ENCODE measurements at regions of chr19 and their contacts with region 1.

Region 1: GRCh38 chr19:12965017-12965811 is 4.2 kb upstream of the DAND5 start:
- DNase-seq: peak; percentile 63 to 88 (median 79)
- ATAC-seq: peak; percentile 95
- H3K4me3 ChIP-seq: peak overlapping the region; percentile 51 to 76
- H3K4me3 Mint-ChIP-seq: peak overlapping the region; percentile 88
- H3K27ac ChIP-seq: no peak overlapping the region
- H3K27ac Mint-ChIP-seq: peak overlapping the region; percentile 53
- H3K4me1 ChIP-seq: peaks cover 9% of the 10 kb centered on the region
- H3K4me1 Mint-ChIP-seq: peaks cover 7% of the 10 kb centered on the region
- H3K27me3 ChIP-seq: no peaks in the 10 kb centered on the region
- H3K27me3 Mint-ChIP-seq: peaks cover 2% of the 10 kb centered on the region
- CTCF ChIP-seq: peak; percentile 93

Region 2: GRCh38 chr19:12890787-12891552 is 74.2 kb before region 1 on chr19 and contains the start of gene GCDH:
- CTCF ChIA-PET with region 1: interaction called, 123 read pairs
- POLR2A ChIA-PET with region 1: interaction called, 8 read pairs
- intact Hi-C with region 1: no loop called
- DNase-seq: peak; percentile 92 to 99 (median 95)
- ATAC-seq: peak; percentile 87
- H3K4me3 ChIP-seq: peak within 1 kb of the TSS; percentile 87 to 92
- H3K4me3 Mint-ChIP-seq: peak within 1 kb of the TSS; percentile 99
- H3K27ac ChIP-seq: peak within 1 kb of the TSS; percentile 77 to 79
- H3K27ac Mint-ChIP-seq: peak within 1 kb of the TSS; percentile 98
- H3K4me1 ChIP-seq: peaks cover 23% of the 10 kb centered on the region
- H3K4me1 Mint-ChIP-seq: peaks cover 29% of the 10 kb centered on the region
- H3K27me3 ChIP-seq: no peaks in the 10 kb centered on the region
- H3K27me3 Mint-ChIP-seq: no peaks in the 10 kb centered on the region
- CTCF ChIP-seq: no peak
- total RNA-seq, gene GCDH: 36.0 to 41.7 TPM

Region 3: GRCh38 chr19:12938234-12939025 is 26.8 kb before region 1 on chr19 and contains the start of gene CALR:
- CTCF ChIA-PET with region 1: interaction called, 15 read pairs
- POLR2A ChIA-PET with region 1: interaction called, 3 read pairs
- intact Hi-C with region 1: no loop called
- DNase-seq: peak; percentile 98 to 100 (median 99)
- ATAC-seq: peak; percentile 88
- H3K4me3 ChIP-seq: peak within 1 kb of the TSS; percentile 71 to 91
- H3K4me3 Mint-ChIP-seq: peak within 1 kb of the TSS; percentile 99
- H3K27ac ChIP-seq: peak within 1 kb of the TSS; percentile 86
- H3K27ac Mint-ChIP-seq: peak within 1 kb of the TSS; percentile 96
- H3K4me1 ChIP-seq: peaks cover 41% of the 10 kb centered on the region
- H3K4me1 Mint-ChIP-seq: peaks cover 58% of the 10 kb centered on the region
- H3K27me3 ChIP-seq: no peaks in the 10 kb centered on the region
- H3K27me3 Mint-ChIP-seq: no peaks in the 10 kb centered on the region
- CTCF ChIP-seq: no peak
- total RNA-seq, gene CALR: 618 to 650 TPM

Region 4: GRCh38 chr19:12983542-12984142 is 18.4 kb after region 1 on chr19:
- CTCF ChIA-PET with region 1: interaction called, 31 read pairs
- POLR2A ChIA-PET with region 1: interaction called, 4 read pairs
- intact Hi-C with region 1: no loop called
- DNase-seq: peak; percentile 64 to 90 (median 81)
- ATAC-seq: peak; percentile 77
- H3K4me3 ChIP-seq: no peak overlapping the region
- H3K4me3 Mint-ChIP-seq: no peak overlapping the region
- H3K27ac ChIP-seq: peak overlapping the region in 1 of 2 experiments; percentile 20
- H3K27ac Mint-ChIP-seq: no peak overlapping the region
- H3K4me1 ChIP-seq: peaks cover 15% of the 10 kb centered on the region
- H3K4me1 Mint-ChIP-seq: peaks cover 8% of the 10 kb centered on the region
- H3K27me3 ChIP-seq: peaks cover 3 to 25% of the 10 kb centered on the region in 2 experiments
- H3K27me3 Mint-ChIP-seq: peaks cover 3% of the 10 kb centered on the region
- CTCF ChIP-seq: peak; percentile 87

Region 5: DNA sequence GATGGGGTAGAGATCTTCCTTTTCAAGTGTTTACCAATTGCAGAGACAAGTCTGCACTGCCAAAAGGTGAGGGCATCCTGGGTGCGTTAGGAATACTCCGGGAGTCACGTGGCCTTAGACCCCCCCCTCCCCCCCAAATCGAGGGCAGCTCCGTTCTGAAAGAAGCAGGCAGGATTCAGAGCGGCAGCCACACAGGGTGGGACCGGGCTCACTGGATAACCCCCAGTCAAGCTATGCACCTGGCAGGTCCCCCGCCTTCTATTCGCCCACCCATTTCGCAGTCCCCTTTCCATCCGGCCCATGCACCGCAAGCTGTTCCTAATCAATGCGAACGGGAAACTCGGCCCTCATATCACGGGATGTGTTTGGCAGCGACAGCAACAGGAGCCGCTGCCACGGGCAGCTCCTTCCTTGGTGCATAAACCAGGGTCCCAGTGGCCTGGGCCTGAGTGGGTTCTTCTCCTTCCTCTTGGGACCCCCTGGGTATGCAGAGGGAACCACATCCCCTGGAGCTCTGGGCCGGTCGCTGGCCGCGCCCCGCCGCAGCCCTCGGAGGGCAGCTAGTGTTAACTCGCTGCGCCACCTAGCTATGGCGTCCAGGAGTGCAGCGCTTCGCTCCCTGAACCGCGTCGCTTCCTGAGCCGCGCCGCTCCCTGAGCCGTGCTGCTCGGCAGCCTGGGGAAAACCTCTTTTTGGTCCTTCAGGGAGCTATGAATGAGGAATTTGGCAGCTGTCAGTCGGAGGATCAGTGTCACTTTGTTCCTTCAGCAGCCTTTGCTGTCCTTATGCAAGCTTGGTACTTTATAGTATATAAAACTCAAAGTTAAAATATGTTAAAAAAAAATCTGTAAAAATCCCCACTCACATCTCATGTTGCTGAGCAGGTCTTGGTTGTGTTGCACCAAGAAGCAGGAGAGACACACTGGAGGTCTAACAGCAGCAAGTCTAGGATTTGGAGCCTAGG is 96.0 kb after region 1 on chr19:
- CTCF ChIA-PET with region 1: interaction called, 37 read pairs
- POLR2A ChIA-PET with region 1: no interaction called
- intact Hi-C with region 1: no loop called
- DNase-seq: peak; percentile 61 to 86 (median 82)
- ATAC-seq: peak; percentile 98
- H3K4me3 ChIP-seq: peak overlapping the region; percentile 48 to 71
- H3K4me3 Mint-ChIP-seq: peak overlapping the region; percentile 82
- H3K27ac ChIP-seq: no peak overlapping the region
- H3K27ac Mint-ChIP-seq: no peak overlapping the region
- H3K4me1 ChIP-seq: peaks cover 8% of the 10 kb centered on the region
- H3K4me1 Mint-ChIP-seq: peaks cover 8% of the 10 kb centered on the region
- H3K27me3 ChIP-seq: peaks cover 0 to 2% of the 10 kb centered on the region in 2 experiments
- H3K27me3 Mint-ChIP-seq: peaks cover 13% of the 10 kb centered on the region
- CTCF ChIP-seq: peak; percentile 96

Region 6: GRCh38 chr19:13093407-13094105 is 128.3 kb after region 1 on chr19:
- CTCF ChIA-PET with region 1: interaction called, 40 read pairs
- POLR2A ChIA-PET with region 1: interaction called, 3 read pairs
- intact Hi-C with region 1: no loop called
- DNase-seq: peak; percentile 55 to 88 (median 80)
- ATAC-seq: peak; percentile 74
- H3K4me3 ChIP-seq: no peak overlapping the region
- H3K4me3 Mint-ChIP-seq: no peak overlapping the region
- H3K27ac ChIP-seq: no peak overlapping the region
- H3K27ac Mint-ChIP-seq: no peak overlapping the region
- H3K4me1 ChIP-seq: peaks cover 29% of the 10 kb centered on the region
- H3K4me1 Mint-ChIP-seq: peaks cover 18% of the 10 kb centered on the region
- H3K27me3 ChIP-seq: peaks cover 16 to 28% of the 10 kb centered on the region in 2 experiments
- H3K27me3 Mint-ChIP-seq: peaks cover 21% of the 10 kb centered on the region
- CTCF ChIP-seq: peak; percentile 92

Measured in CD8-positive, alpha-beta T cell (primary cell).